Aorta (tissue), 5 donors: ENCODE measurements at regions of chr2 and their contacts with region 1.

Region 1: GRCh38 chr2:72993147-72993932 is 76.0 kb downstream of the EMX1 start:
- DNase-seq: peak; percentile 35 to 41
- ATAC-seq: peak; percentile 48
- H3K4me3 ChIP-seq: no peak overlapping the region
- H3K27ac ChIP-seq: no peak overlapping the region
- H3K4me1 ChIP-seq: no peaks in the 10 kb centered on the region
- H3K27me3 ChIP-seq: no peaks in the 10 kb centered on the region

Region 2: DNA sequence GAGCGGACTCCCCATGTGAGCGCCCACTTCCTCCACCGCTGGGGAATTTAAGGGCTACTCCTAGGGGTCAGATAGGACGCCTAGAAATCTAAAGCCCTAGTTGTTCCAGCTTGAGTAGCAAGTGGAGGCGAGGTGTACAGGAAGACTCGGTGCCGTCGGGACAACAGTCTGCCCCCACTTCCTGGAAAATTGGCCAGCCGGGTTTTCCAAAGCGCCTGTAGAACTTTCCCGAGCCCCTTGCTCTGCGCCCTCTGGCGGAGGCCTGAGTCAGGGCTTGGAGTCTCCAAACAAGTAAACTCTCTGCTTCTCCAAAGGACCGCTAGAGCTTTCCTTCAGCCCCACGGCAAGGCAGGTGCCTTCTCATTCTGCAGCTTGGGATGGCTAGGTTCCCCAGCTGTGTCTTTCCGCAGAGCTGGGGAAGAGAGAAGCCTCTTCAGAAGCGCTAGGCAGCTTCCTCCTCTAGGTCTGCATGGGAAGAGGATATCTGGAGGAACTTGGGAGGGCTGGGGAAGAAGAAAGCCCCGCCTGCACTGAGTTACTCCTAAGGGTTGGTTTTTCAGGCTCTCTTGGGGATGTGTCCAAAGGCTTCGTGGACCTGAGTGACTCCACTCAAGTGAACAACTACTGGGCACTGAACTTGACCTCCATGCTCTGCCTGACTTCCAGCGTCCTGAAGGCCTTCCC is 105.4 kb before region 1 on chr2:
- intact Hi-C with region 1: no loop called
- DNase-seq: peak; percentile 93 to 97
- ATAC-seq: peak; percentile 83
- H3K4me3 ChIP-seq: peak overlapping the region; percentile 49 to 72
- H3K27ac ChIP-seq: peak overlapping the region; percentile 57 to 78
- H3K4me1 ChIP-seq: no peaks in the 10 kb centered on the region
- H3K27me3 ChIP-seq: no peaks in the 10 kb centered on the region

Region 3: DNA sequence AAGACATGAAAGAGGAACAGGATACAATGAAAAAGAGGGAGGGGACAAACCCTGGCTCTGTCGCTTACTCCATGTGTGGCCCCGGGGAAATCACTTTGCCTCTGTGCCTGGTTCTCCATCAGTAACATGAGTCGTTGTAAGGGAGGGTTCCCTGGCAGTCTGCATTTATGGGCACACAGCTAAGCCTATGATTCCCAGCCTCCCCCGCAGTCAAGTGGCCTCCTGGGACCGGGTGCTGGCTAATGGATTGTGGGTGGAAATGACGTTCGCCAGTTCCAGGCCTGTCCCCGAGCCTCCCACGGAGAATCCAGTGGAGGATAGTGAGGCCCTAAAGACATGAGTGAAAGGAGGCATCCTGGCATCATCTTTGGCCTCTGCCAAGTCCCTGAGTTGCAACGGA is 35.5 kb after region 1 on chr2:
- intact Hi-C with region 1: loop called in 1 of 2 experiments (anchors 5 kb)
- DNase-seq: peak; percentile 73 to 87
- ATAC-seq: peak; percentile 26
- H3K4me3 ChIP-seq: no peak overlapping the region
- H3K27ac ChIP-seq: no peak overlapping the region
- H3K4me1 ChIP-seq: no peaks in the 10 kb centered on the region
- H3K27me3 ChIP-seq: no peaks in the 10 kb centered on the region

Region 4: DNA sequence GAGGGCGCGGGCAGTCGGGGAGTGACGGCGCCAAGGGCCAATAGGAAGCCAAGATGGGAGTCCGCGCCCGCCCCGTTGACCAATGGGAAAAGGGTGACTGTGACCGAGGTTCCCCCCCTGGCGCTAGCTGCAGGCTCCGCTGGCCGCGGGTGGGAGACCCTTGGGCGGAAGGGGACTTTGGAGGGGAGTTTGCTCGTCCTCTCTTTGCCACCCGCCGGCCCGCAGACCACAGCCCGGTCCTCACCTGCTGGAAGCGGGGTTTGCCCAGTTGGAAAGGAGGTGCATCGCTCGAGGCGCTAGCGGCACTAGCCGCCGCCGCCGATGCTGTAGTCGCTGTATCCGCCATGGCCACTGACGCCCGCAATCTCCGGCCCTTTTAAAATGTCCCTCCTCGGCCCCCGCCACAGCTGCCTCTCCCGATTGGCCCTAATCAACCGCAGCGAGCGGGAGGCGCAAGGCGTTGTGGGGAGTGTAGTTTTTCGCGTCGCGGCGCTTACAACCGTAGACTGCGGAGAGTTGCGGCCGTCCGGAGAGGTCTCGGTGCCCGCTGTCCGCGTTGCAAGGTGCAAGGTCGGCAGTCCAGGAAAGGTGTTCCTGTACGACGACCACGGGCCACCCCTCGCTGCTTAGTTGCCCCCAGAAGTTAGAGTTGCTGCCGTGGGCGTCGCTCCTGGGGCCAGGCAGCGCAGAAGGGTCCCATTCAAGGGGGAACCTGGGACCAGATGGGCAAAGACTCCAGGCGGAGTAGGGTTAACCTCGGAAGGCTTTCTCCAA is 78.2 kb after region 1 on chr2 and contains the start of gene SFXN5:
- intact Hi-C with region 1: loop called in 1 of 2 experiments (anchors 2 kb)
- DNase-seq: peak; percentile 98 to 100
- ATAC-seq: peak; percentile 98
- H3K4me3 ChIP-seq: peak within 1 kb of the TSS; percentile 60 to 77
- H3K27ac ChIP-seq: peak within 1 kb of the TSS; percentile 49 to 94
- H3K4me1 ChIP-seq: peaks cover 4 to 6% of the 10 kb centered on the region in 2 donors
- H3K27me3 ChIP-seq: no peaks in the 10 kb centered on the region
- total RNA-seq, gene SFXN5: 12.6 to 20.7 TPM

Region 5: GRCh38 chr2:73156539-73157124 is 163.3 kb after region 1 on chr2:
- intact Hi-C with region 1: loop called (anchors 2 to 5 kb)
- DNase-seq: peak; percentile 78 to 91
- ATAC-seq: peak; percentile 91
- H3K4me3 ChIP-seq: no peak overlapping the region
- H3K27ac ChIP-seq: no peak overlapping the region
- H3K4me1 ChIP-seq: no peaks in the 10 kb centered on the region
- H3K27me3 ChIP-seq: no peaks in the 10 kb centered on the region

Region 6: DNA sequence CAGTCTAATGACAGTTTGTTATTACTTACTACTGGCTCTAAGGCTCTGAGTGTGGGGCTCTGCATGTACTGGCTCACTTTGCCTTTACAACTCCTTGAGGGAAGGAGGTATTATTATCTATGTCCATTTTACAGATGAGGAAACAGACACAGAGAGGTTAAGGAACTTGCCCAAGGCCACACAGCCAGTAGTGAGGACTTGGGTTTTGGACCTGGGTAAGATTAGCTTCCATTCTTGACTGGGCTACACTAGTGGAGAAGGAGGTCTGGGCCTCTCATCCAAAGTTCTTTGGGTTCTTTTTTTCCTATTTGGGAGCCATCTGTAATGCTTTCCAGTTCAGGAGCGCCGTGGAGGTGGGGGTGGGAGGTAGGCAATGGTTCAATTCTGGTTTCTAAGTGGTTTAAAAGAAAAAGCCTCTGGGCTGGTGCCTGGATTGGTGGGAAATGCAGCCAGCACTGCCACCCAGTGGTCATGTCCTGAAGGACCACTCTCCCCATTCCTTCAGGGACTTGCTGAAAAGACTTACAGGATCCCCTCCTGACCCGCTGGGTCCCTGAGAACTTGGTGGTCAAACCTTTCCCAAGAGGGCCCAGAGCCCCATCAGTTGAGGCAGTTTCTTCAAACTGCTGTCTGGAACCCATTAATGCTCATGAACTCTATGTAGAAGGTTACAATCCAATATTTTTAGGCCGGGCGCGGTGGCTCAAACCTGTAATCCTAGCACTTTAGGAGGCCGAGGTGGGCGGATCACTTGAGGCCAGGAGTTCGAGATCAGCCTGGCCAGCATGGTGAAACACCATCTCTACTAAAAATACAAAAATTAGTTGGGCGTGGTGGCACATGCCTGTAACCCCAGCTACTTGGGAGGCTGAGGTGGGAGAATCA is 170.4 kb after region 1 on chr2:
- intact Hi-C with region 1: loop called in 1 of 2 experiments (anchors 5 kb)
- DNase-seq: peak; percentile 71 to 86
- ATAC-seq: peak; percentile 82
- H3K4me3 ChIP-seq: no peak overlapping the region
- H3K27ac ChIP-seq: no peak overlapping the region
- H3K4me1 ChIP-seq: no peaks in the 10 kb centered on the region
- H3K27me3 ChIP-seq: no peaks in the 10 kb centered on the region

Region 7: GRCh38 chr2:73176881-73177644 is 183.7 kb after region 1 on chr2:
- intact Hi-C with region 1: loop called in 1 of 2 experiments (anchors 5 kb)
- DNase-seq: peak; percentile 94 to 98
- ATAC-seq: peak; percentile 97
- H3K4me3 ChIP-seq: peak overlapping the region; percentile 2 to 8
- H3K27ac ChIP-seq: peak overlapping the region in 1 of 2 donors; percentile 28
- H3K4me1 ChIP-seq: no peaks in the 10 kb centered on the region
- H3K27me3 ChIP-seq: no peaks in the 10 kb centered on the region